ENCODE measurements at regions of chr7 and their contacts with region 1.

Region 1: GRCh38 chr7:151759591-151760042 is 117.3 kb downstream of the PRKAG2 start:
- DNase-seq: no peak
- ATAC-seq: peak; percentile 55

Region 2: GRCh38 chr7:150586785-150587152 is 1172.8 kb before region 1 on chr7:
- intact Hi-C with region 1: no loop called
- DNase-seq: no peak
- ATAC-seq: peak; percentile 65

Region 3: GRCh38 chr7:151459726-151460473 is 299.7 kb before region 1 on chr7:
- intact Hi-C with region 1: loop called (anchors 10 kb)
- DNase-seq: peak; percentile 86
- ATAC-seq: peak; percentile 91

Region 4: DNA sequence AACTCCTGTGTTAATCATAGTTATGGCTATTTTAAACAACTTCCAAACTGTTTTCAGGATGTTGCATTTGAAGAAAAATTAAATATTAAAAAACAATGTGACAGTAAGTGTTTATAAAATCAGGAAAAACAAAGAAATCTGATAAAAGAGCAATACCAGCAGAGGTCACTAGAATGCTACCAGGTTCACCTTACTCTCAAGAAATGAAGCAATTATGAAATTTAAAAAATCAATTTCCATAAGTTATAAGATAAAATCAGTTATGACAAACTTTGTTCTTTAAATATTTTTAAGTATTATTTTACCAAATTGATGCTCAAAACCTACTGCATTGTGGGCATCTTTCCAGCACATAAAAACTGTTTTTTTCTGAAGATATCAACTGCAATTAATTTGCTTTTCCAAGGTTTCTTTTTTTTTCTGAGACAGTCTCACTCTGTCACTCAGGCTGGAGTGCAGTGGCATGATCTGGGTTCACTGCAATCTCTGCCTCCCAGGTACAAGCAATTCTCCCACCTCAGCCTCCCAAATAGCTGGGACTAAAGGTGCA is 189.2 kb before region 1 on chr7:
- intact Hi-C with region 1: loop called (anchors 10 kb)
- DNase-seq: no peak
- ATAC-seq: no peak

Region 5: DNA sequence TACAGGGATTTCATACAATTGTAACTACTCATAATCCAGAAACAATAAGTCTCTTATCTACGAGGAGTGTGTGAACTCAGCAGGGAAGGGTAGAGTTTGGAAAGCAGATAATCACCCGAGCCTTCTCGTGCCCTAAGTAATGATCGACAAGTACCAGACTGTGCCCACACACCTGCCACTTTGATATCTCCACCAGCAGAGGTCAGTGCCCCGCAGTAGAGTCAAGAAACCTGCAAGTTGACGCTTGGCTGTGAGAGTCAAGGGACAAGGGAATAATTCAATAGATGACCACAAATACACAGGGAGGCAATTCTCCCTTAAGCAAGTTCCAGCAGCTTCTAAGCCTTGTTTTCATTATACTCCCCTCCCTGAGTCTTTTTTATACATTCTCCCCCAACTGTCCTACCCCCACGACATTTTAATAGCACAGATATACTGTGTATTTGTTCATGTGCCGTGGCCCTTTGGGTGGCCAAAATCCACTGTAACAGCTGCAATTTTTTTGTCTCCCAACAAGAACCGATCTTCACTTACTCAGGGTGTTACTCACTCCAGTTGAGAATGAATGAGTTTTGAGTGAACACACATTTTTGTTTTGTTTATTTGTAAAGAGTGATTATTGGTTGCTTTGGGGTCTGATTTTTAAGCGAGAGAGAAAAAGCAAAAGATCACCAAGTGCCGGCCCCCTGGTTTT is 133.0 kb before region 1 on chr7:
- intact Hi-C with region 1: loop called (anchors 10 kb)
- DNase-seq: no peak
- ATAC-seq: peak; percentile 13

Region 6: DNA sequence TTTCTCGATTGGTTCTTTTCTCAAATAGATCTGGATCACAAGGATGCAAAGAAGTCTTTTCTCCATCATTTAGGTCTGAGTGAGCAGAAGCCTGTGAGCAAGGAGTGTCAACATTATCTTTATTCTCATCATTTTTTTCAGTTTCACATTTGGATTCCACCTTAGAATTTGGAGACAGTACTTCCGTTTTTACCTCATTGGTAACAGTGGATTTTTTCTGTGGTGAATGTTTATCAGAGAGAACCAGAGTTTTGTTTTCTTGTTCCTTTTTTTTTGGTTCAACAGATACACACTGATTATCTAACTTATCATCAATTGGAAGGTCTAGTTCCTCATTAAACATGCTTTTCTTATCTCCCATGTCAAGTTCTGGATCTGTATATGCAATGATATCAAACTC is 417.2 kb after region 1 on chr7:
- intact Hi-C with region 1: no loop called
- DNase-seq: no peak
- ATAC-seq: no peak

Region 7: DNA sequence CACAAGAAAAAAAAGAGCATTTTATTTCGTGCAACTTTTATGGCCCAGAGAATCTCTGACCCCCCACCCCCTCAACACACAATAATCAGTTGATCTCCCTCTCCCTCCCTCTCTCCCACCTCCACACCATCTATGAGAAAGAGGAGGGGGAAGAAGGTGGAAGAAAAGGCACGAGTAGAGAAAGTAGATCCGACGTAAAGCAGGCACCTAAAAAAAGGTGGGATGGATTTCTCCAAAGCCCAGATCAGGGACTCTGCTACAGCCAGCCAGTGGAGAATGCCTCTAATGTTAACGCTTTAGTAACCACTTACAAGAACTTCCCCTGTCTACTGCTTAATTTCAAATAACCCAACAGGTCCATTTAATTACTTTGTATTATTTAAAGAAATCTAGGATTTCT is 651.8 kb after region 1 on chr7:
- intact Hi-C with region 1: no loop called
- DNase-seq: no peak
- ATAC-seq: peak; percentile 30